Calu3 (cell line): ENCODE measurements at regions of chrX and their contacts with region 1.

Region 1: GRCh38 chrX:1205680-1206611 is 6.5 kb downstream of the CRLF2 start:
- DNase-seq: peak; percentile 22
- H3K4me3 Mint-ChIP-seq: no peak overlapping the region
- H3K27ac Mint-ChIP-seq: no peak overlapping the region
- H3K4me1 Mint-ChIP-seq: no peaks in the 10 kb centered on the region
- H3K27me3 Mint-ChIP-seq: no peaks in the 10 kb centered on the region
- CTCF ChIP-seq: no peak

Region 2: GRCh38 chrX:1239681-1240142 is 33.8 kb after region 1 on chrX:
- CTCF ChIA-PET with region 1: no interaction called
- intact Hi-C with region 1: loop called (anchors 5 kb)
- DNase-seq: no peak
- H3K4me3 Mint-ChIP-seq: no peak overlapping the region
- H3K27ac Mint-ChIP-seq: no peak overlapping the region
- H3K4me1 Mint-ChIP-seq: peaks cover 8% of the 10 kb centered on the region
- H3K27me3 Mint-ChIP-seq: no peaks in the 10 kb centered on the region
- CTCF ChIP-seq: no peak

Region 3: DNA sequence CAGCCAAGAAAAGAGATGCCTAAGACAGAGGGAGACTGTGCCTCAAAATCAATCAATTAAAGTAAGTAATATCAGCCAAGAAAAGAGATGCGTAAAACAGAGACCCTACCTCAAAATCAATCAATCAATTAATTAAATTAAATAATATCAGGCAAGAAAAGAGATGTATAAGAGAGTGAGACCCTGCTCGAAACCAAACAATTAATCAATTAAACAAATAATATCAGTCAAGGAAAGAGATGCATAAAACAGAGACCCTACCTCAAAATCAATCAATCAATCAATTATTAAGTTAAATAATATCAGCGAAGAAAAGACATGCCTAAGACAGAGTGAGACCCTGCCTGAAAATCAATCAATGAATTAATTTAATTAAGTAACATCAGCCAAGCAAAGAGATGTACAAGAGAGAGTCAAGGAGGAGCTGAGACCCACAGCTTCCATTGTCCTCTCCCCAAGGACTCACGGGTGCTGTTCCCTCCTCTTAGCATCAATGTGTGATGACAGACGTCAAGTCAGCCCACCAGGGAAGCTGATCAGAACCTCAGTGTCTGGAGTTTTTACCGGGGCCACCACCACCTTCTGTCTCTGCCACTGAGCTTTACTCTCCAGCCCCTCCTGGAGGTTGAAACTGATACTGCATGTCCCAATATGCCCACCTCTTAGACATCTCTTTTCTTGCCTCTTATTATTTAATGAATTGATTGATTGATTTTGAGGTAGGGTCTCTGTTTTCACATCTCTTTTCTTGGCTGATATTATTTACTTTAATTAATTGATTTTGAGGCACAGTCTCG is 375.0 kb after region 1 on chrX:
- CTCF ChIA-PET with region 1: no interaction called
- intact Hi-C with region 1: no loop called
- DNase-seq: peak; percentile 55
- H3K4me3 Mint-ChIP-seq: no peak overlapping the region
- H3K27ac Mint-ChIP-seq: no peak overlapping the region
- H3K4me1 Mint-ChIP-seq: peaks cover 15% of the 10 kb centered on the region
- H3K27me3 Mint-ChIP-seq: no peaks in the 10 kb centered on the region
- CTCF ChIP-seq: peak; percentile 65